Breast epithelium (tissue), 4 donors: ENCODE measurements at regions of chr14 and their contacts with region 1.

Region 1: GRCh38 chr14:85817430-85817829 is 287.5 kb downstream of the FLRT2 start:
- DNase-seq: no peak
- H3K4me3 ChIP-seq: no peak overlapping the region
- H3K27ac ChIP-seq: no peak overlapping the region
- H3K4me1 ChIP-seq: no peaks in the 10 kb centered on the region
- H3K27me3 ChIP-seq: no peaks in the 10 kb centered on the region
- CTCF ChIP-seq: no peak
- POLR2A ChIP-seq: no peak

Region 2: DNA sequence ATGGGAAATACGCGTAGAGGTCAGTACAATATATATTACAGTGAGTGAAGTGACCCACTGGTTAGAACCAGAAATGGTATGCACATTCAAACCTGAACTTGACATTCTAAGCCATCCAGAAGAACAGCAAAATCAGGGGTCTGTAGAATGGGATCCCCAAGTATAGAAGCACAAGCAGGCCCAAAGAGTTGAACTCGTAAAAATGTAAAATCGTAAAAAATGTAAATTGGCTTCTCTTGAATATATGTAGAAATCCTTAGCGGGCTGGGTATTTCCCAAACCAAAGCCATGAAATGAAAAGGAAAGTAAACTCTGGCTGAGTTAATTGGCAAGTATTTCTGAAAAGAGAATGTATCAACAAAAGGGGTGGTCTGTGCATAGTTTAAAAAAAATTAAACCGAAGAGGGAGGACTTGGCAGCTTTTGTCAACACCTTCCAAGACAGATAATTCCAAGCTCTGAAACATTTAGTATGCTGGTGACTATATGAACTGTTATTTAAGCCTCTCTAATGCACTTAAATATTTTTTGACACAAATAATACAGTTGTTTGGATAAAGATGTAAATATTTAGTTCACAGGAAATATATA is 1793.1 kb before region 1 on chr14:
- intact Hi-C with region 1: loop called (anchors 5 kb)
- DNase-seq: no peak
- H3K4me3 ChIP-seq: no peak overlapping the region
- H3K27ac ChIP-seq: no peak overlapping the region
- H3K4me1 ChIP-seq: no peaks in the 10 kb centered on the region
- H3K27me3 ChIP-seq: no peaks in the 10 kb centered on the region
- CTCF ChIP-seq: no peak
- POLR2A ChIP-seq: no peak

Region 3: GRCh38 chr14:85764822-85765221 is 52.6 kb before region 1 on chr14:
- intact Hi-C with region 1: no loop called
- DNase-seq: no peak
- H3K4me3 ChIP-seq: no peak overlapping the region
- H3K27ac ChIP-seq: no peak overlapping the region
- H3K4me1 ChIP-seq: no peaks in the 10 kb centered on the region
- H3K27me3 ChIP-seq: no peaks in the 10 kb centered on the region
- CTCF ChIP-seq: no peak
- POLR2A ChIP-seq: no peak

Region 4: GRCh38 chr14:87767567-87767901 is 1950.1 kb after region 1 on chr14:
- intact Hi-C with region 1: no loop called
- DNase-seq: no peak
- H3K4me3 ChIP-seq: no peak overlapping the region
- H3K27ac ChIP-seq: no peak overlapping the region
- H3K4me1 ChIP-seq: no peaks in the 10 kb centered on the region
- H3K27me3 ChIP-seq: no peaks in the 10 kb centered on the region
- CTCF ChIP-seq: no peak
- POLR2A ChIP-seq: no peak